K562 (cell line): ENCODE measurements at regions of chr4 and their contacts with region 1.

Region 1: DNA sequence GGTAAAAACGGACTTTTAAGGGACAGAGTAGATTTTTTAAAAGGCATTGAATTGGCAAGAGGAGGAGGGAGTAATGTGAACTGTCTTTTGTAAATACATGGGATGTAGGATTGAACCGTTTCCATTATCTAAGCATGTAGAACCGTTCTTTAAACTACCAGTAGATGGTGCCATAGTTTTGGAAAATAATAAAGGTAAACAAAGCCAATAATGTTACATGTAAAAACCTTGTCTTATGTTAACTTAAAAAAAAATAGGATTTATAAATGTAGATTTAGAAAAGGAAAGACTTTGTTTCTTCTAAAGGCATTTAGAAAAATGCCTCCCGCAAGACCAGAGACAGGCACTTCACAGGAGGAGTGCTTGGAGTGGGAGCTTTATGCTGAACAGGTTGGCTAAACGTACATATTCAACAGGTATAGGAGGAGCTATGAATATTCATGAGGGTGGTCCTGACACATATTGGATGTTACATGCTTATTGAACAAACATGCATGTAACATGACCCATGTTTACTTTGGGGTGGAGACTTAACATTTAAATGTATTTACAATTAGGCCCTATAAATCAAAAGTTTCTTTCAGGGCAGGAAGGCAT is 45.5 kb upstream of the FAM241A start:
- DNase-seq: peak; percentile 30 to 51 (median 35)
- ATAC-seq: peak; percentile 95
- H3K4me3 ChIP-seq: no peak overlapping the region
- H3K27ac ChIP-seq: no peak overlapping the region
- H3K4me1 ChIP-seq: no peaks in the 10 kb centered on the region
- H3K27me3 ChIP-seq: no peaks in the 10 kb centered on the region; a peak in 1 of 5 replicates
- CTCF ChIP-seq: peak; percentile 43 to 81 (median 49); a peak in 3 of 6 replicates
- EP300 ChIP-seq: no peak
- POLR2A ChIP-seq: no peak
- RAD21 ChIP-seq: peak; percentile 88 to 89

Region 2: GRCh38 chr4:111573386-111573785 is 526.4 kb before region 1 on chr4:
- CTCF ChIA-PET with region 1: no interaction called
- POLR2A ChIA-PET with region 1: no interaction called
- in situ Hi-C with region 1: no loop called
- intact Hi-C with region 1: no loop called
- DNase-seq: no peak
- ATAC-seq: no peak
- H3K4me3 ChIP-seq: no peak overlapping the region
- H3K27ac ChIP-seq: no peak overlapping the region
- H3K4me1 ChIP-seq: no peaks in the 10 kb centered on the region
- H3K27me3 ChIP-seq: no peaks in the 10 kb centered on the region
- CTCF ChIP-seq: no peak
- EP300 ChIP-seq: no peak
- POLR2A ChIP-seq: no peak
- RAD21 ChIP-seq: no peak

Region 3: DNA sequence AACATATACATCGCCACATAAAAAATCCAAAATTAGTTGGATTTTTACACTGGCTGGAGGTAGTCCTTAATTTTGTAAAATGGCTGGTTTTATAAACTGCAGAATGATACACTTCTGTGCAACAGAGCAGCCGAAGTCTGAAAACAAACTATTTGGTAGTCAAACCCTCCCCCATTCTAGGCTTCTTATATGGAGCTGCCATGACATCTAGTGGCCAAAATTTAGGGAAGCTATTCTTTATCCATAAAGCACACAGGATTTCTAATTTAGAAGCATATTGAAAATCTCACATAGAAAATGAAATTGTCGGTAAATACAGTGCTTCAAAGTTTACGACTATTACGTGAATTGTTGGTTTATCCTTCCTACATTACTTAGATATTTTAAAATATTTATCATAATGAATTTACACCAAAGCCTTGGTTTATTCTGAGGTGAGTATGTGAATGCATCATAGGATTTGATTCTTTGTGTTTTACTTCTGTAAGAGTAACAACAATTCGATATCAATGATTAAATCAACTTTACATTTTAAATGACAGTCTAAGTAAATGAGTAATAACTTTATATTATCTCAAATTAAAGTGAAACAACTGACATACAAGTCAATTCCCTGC is 68.0 kb before region 1 on chr4:
- CTCF ChIA-PET with region 1: no interaction called
- POLR2A ChIA-PET with region 1: no interaction called
- in situ Hi-C with region 1: no loop called
- intact Hi-C with region 1: no loop called
- DNase-seq: peak; percentile 38 to 58 (median 40)
- ATAC-seq: peak; percentile 86
- H3K4me3 ChIP-seq: no peak overlapping the region
- H3K27ac ChIP-seq: no peak overlapping the region
- H3K4me1 ChIP-seq: no peaks in the 10 kb centered on the region
- H3K27me3 ChIP-seq: no peaks in the 10 kb centered on the region
- CTCF ChIP-seq: peak; percentile 57 to 76 (median 69); a peak in 5 of 6 replicates
- EP300 ChIP-seq: no peak
- POLR2A ChIP-seq: no peak
- RAD21 ChIP-seq: peak; percentile 78 to 85

Region 4: DNA sequence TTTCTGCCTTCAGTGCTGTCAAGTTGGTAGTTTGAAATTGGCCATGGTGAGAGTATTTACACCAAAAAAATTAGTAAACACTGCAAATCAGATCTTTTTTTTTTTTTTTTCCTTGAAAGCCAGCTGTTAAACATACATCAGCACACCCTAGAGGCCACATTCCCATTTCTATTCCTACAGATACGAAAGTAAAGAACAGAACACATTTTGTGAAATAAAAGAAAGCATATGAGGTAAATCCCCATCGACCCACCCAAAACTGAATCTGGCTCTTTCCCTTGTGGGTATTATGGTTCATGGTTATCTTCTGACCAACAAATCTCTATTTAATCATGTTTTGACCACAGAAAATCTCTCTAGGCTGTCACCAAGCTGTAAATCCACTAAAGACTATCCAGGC is 90.0 kb after region 1 on chr4:
- CTCF ChIA-PET with region 1: interaction called, 6 read pairs
- POLR2A ChIA-PET with region 1: interaction called, 3 read pairs
- in situ Hi-C with region 1: no loop called
- intact Hi-C with region 1: loop called (anchors 1 kb)
- DNase-seq: no peak
- ATAC-seq: no peak
- H3K4me3 ChIP-seq: no peak overlapping the region
- H3K27ac ChIP-seq: no peak overlapping the region
- H3K4me1 ChIP-seq: no peaks in the 10 kb centered on the region
- H3K27me3 ChIP-seq: no peaks in the 10 kb centered on the region
- CTCF ChIP-seq: peak in 2 of 3 experiments; percentile 11 to 48; a peak in 2 of 6 replicates
- EP300 ChIP-seq: no peak
- POLR2A ChIP-seq: no peak
- RAD21 ChIP-seq: peak in 1 of 2 experiments; percentile 18; a peak in 3 of 4 replicates

Region 5: GRCh38 chr4:112231779-112232713 is 132.2 kb after region 1 on chr4 and contains the start of gene AP1AR:
- CTCF ChIA-PET with region 1: interaction called, 30 read pairs
- POLR2A ChIA-PET with region 1: interaction called, 4 read pairs
- in situ Hi-C with region 1: loop called (anchors 5 kb)
- intact Hi-C with region 1: loop called (anchors 1 kb)
- DNase-seq: peak; percentile 85 to 90 (median 88)
- ATAC-seq: peak; percentile 90
- H3K4me3 ChIP-seq: peak within 1 kb of the TSS; percentile 84
- H3K27ac ChIP-seq: peak within 1 kb of the TSS; percentile 96
- H3K4me1 ChIP-seq: peaks cover 0 to 11% of the 10 kb centered on the region in 2 experiments; a peak in 2 of 5 replicates
- H3K27me3 ChIP-seq: no peaks in the 10 kb centered on the region
- CTCF ChIP-seq: peak; percentile 47 to 59 (median 51); a peak in 5 of 6 replicates
- EP300 ChIP-seq: no peak
- POLR2A ChIP-seq: peak; percentile 90
- RAD21 ChIP-seq: no peak
- polyA plus RNA-seq, gene AP1AR: 2.6 to 2.7 TPM

Region 6: DNA sequence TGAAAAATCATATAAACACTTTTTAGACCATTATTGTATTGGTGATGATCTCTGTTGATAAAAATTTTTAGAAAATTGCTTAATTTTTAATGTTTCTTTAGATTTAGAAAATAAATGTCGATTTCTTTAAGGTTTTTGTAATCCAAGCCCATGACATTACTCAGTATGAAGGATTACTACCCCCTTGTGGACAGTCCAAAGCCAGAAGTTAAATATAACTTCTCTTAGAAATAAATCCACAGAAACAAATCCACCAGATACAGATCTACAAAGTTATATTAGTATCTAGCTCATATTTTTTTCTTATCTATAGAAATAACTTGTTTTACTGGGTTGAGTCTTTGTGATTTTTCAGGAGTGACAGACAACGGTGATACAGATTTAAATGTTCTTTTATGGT is 167.0 kb after region 1 on chr4:
- CTCF ChIA-PET with region 1: interaction called, 31 read pairs
- POLR2A ChIA-PET with region 1: no interaction called
- in situ Hi-C with region 1: no loop called
- intact Hi-C with region 1: no loop called
- DNase-seq: peak; percentile 15 to 28 (median 20)
- ATAC-seq: peak; percentile 74
- H3K4me3 ChIP-seq: no peak overlapping the region
- H3K27ac ChIP-seq: no peak overlapping the region
- H3K4me1 ChIP-seq: no peaks in the 10 kb centered on the region
- H3K27me3 ChIP-seq: no peaks in the 10 kb centered on the region
- CTCF ChIP-seq: peak in 2 of 3 experiments; percentile 37 to 51; a peak in 3 of 6 replicates
- EP300 ChIP-seq: no peak
- POLR2A ChIP-seq: no peak
- RAD21 ChIP-seq: peak; percentile 35 to 51; a peak in 3 of 4 replicates

Region 7: GRCh38 chr4:112327965-112328733 is 228.3 kb after region 1 on chr4:
- CTCF ChIA-PET with region 1: no interaction called
- POLR2A ChIA-PET with region 1: no interaction called
- in situ Hi-C with region 1: no loop called
- intact Hi-C with region 1: loop called (anchors 10 kb)
- DNase-seq: peak in 2 of 4 experiments; percentile 8 to 37
- ATAC-seq: peak; percentile 54; the same call in 2 of the 3 replicates
- H3K4me3 ChIP-seq: no peak overlapping the region
- H3K27ac ChIP-seq: no peak overlapping the region
- H3K4me1 ChIP-seq: no peaks in the 10 kb centered on the region
- H3K27me3 ChIP-seq: no peaks in the 10 kb centered on the region
- CTCF ChIP-seq: peak; percentile 24 to 62 (median 34); a peak in 3 of 6 replicates
- EP300 ChIP-seq: no peak
- POLR2A ChIP-seq: no peak
- RAD21 ChIP-seq: peak; percentile 44 to 51

Region 8: DNA sequence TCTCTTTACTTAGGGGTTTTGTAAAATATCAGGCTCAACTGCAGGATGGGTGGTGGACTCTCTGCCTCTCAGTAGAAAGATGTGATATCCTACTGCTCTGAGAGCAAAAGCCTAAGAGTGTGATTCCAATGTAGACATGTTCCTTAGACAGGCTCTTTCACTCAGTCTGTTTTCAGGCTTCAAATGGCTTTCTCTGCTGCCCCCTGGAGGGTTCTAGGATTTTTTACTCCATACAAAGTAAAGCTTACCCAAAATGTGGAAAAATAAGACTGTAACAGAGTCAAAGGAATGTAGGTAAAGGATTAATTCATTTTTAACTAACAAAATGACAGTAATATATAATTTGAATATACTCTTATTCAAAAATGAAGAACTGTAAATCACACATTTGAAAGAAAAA is 504.8 kb after region 1 on chr4:
- CTCF ChIA-PET with region 1: interaction called, 4 read pairs
- POLR2A ChIA-PET with region 1: no interaction called
- in situ Hi-C with region 1: no loop called
- intact Hi-C with region 1: loop called (anchors 5 kb)
- DNase-seq: peak; percentile 36 to 60 (median 46)
- ATAC-seq: peak; percentile 95
- H3K4me3 ChIP-seq: no peak overlapping the region
- H3K27ac ChIP-seq: no peak overlapping the region
- H3K4me1 ChIP-seq: no peaks in the 10 kb centered on the region; a peak in 1 of 5 replicates
- H3K27me3 ChIP-seq: no peaks in the 10 kb centered on the region
- CTCF ChIP-seq: peak; percentile 53 to 77 (median 64); a peak in 4 of 6 replicates
- EP300 ChIP-seq: no peak
- POLR2A ChIP-seq: no peak
- RAD21 ChIP-seq: peak; percentile 70 to 75

Region 9: GRCh38 chr4:112636688-112637551 is 537.1 kb after region 1 on chr4 and contains the starts of genes LARP7 and ZGRF1:
- CTCF ChIA-PET with region 1: no interaction called
- POLR2A ChIA-PET with region 1: no interaction called
- in situ Hi-C with region 1: no loop called
- intact Hi-C with region 1: loop called (anchors 10 kb)
- DNase-seq: peak; percentile 89 to 98 (median 90)
- ATAC-seq: peak; percentile 95
- H3K4me3 ChIP-seq: peak within 1 kb of the TSS; percentile 87
- H3K27ac ChIP-seq: peak within 1 kb of the TSS; percentile 87
- H3K4me1 ChIP-seq: peaks cover 0 to 2% of the 10 kb centered on the region in 2 experiments; a peak in 2 of 5 replicates
- H3K27me3 ChIP-seq: no peaks in the 10 kb centered on the region
- CTCF ChIP-seq: peak; percentile 79 to 88 (median 80)
- EP300 ChIP-seq: peak; percentile 42; the same call in 1 of the 2 replicates
- POLR2A ChIP-seq: peak; percentile 82
- RAD21 ChIP-seq: no peak
- polyA plus RNA-seq, gene LARP7: 55.5 to 56.0 TPM
- polyA plus RNA-seq, gene ZGRF1: 8.8 to 12.2 TPM